IMR-90 (cell line): ENCODE measurements at regions of chr3 and their contacts with region 1.

Region 1: DNA sequence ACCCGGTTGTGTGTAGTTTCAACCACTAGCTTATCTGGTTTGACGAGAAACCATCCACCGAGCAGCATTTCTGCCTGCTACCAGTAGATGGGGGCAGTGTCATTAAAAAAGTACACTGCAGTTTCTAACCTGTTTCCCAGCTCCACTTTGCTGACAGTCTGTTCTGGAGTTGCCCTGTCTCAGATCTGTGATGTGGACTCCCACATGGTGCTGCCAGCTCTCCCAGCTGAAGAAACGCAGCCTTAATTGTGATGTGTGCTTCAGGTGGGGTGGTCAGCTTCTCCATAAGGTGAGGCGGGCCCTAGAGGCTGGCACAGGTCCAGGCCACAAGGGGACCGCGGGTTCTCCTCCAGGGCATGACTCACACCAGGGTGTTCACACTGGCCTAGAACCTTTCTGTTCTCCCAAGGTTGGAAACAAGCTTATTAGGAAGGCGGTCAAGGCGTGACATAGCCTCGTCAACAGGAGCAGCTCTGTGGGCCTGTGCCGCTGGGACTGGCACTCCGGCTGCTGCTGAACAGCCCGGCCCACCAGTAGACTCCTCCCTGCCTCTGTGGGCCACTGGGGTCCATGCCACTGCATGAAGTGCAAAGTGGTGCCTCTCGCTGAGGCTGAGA is 2.9 kb upstream of the FAM43A start:
- DNase-seq: peak; percentile 86
- ATAC-seq: peak; percentile 55
- H3K4me3 ChIP-seq: no peak overlapping the region
- H3K27ac ChIP-seq: no peak overlapping the region
- H3K4me1 ChIP-seq: peaks cover 7% of the 10 kb centered on the region
- H3K27me3 ChIP-seq: no peaks in the 10 kb centered on the region; the same call in 1 of the 2 replicates
- CTCF ChIP-seq: peak; percentile 94
- POLR2A ChIP-seq: 0 out of 2 replicates have a peak, but pooled peaks have one; percentile 27
- RAD21 ChIP-seq: peak; percentile 93

Region 2: GRCh38 chr3:194395778-194396547 is 286.8 kb before region 1 on chr3:
- CTCF ChIA-PET with region 1: no interaction called
- POLR2A ChIA-PET with region 1: no interaction called
- dilution Hi-C with region 1: no loop called
- in situ Hi-C with region 1: no loop called
- intact Hi-C with region 1: no loop called
- DNase-seq: peak; percentile 61
- ATAC-seq: peak; percentile 73
- H3K4me3 ChIP-seq: no peak overlapping the region
- H3K27ac ChIP-seq: no peak overlapping the region
- H3K4me1 ChIP-seq: peaks cover 9% of the 10 kb centered on the region
- H3K27me3 ChIP-seq: peaks cover 20% of the 10 kb centered on the region
- CTCF ChIP-seq: no peak
- POLR2A ChIP-seq: no peak
- RAD21 ChIP-seq: no peak

Region 3: DNA sequence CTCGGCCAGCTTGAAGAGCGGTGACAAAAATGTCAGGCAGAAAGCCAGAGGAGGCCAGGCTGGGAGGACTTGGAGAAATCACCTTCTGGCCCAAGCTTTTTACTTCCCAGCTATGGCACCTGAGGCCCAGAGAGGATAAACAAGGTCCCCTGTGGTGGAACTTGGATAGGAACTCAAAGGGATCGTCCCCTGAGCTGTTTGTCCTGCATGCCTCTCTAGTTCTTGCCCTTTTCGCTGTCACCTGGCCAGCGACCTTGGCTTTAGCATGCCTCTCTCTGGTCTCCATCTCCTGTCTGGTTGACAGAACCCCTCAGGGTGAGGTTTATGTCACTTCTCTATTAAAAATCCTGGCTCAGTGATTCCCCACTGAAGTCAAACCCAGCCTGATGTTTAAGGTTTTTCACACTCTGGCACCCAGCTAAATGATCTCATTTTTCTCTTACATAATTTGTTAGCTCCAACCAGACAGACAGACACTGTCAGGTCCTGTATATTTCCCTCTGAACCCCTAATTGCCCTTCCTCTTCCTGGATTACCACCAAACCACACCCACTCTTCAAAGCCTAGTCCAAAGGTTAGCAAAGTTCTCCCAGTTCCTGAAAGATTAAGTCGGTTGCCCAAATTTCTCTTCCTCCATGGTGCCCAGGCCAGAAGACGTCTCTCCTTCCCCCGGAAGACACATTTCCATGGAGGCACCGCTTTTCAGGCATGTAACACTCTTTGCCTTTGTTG is 172.0 kb after region 1 on chr3:
- CTCF ChIA-PET with region 1: no interaction called
- POLR2A ChIA-PET with region 1: no interaction called
- dilution Hi-C with region 1: no loop called
- in situ Hi-C with region 1: no loop called
- intact Hi-C with region 1: loop called (anchors 5 kb)
- DNase-seq: no peak
- ATAC-seq: no peak
- H3K4me3 ChIP-seq: no peak overlapping the region
- H3K27ac ChIP-seq: no peak overlapping the region
- H3K4me1 ChIP-seq: peaks cover 13% of the 10 kb centered on the region
- H3K27me3 ChIP-seq: peaks cover 4% of the 10 kb centered on the region; the same call in 1 of the 2 replicates
- CTCF ChIP-seq: no peak
- POLR2A ChIP-seq: no peak
- RAD21 ChIP-seq: no peak

Region 4: DNA sequence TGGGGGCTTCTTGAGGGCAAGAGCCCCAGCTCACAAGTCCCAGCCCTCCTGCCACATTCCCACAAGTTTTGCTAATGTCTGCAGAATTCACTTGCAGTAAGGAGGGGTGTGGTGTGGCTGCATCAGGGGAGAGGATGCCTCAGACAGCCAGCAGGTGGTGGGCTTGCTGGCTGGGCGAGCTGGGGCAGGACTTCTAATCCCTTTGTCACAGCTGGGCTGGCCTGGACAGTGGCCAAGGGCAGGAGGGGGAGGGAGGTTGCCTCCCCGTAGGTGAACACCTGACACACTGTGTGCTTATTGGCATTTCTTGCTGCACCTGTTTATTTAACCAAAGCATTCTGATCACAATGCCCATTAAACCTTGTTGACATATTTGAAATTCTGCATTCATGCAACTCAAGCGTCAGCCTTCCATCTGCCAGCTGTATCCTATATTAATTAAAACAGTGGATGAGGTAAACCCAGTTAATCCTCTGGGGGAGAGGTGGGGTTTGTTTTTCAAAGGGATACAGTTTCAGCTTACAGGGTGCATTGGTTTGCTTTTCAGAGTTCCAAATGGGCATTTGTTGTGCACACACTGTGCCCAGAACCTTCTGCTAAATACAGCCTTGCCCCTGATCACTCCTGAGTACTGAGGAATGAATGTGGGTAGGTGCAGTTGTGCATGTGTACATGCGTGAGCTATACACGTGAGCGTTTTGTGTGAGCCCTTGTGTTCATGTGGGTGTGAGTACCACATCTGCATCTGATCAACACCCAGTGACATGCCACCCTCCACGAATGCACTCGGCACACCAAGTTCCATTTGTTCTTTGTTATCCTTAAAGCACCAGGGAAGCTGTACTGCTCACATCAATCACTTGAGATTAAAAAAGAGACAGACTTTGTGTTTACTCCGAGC is 319.4 kb after region 1 on chr3:
- CTCF ChIA-PET with region 1: no interaction called
- POLR2A ChIA-PET with region 1: no interaction called
- dilution Hi-C with region 1: no loop called
- in situ Hi-C with region 1: no loop called
- intact Hi-C with region 1: loop called (anchors 5 kb)
- DNase-seq: peak; percentile 34
- ATAC-seq: peak; percentile 53; the same call in 1 of the 2 replicates
- H3K4me3 ChIP-seq: no peak overlapping the region
- H3K27ac ChIP-seq: no peak overlapping the region; the same call in 1 of the 2 replicates
- H3K4me1 ChIP-seq: peaks cover 6% of the 10 kb centered on the region; the same call in 1 of the 2 replicates
- H3K27me3 ChIP-seq: peaks cover 76% of the 10 kb centered on the region
- CTCF ChIP-seq: peak; percentile 43
- POLR2A ChIP-seq: no peak
- RAD21 ChIP-seq: peak; percentile 47

Region 5: GRCh38 chr3:195154793-195155535 is 472.2 kb after region 1 on chr3:
- CTCF ChIA-PET with region 1: interaction called, 8 read pairs
- POLR2A ChIA-PET with region 1: no interaction called
- dilution Hi-C with region 1: no loop called
- in situ Hi-C with region 1: no loop called
- intact Hi-C with region 1: loop called (anchors 2 kb)
- DNase-seq: peak; percentile 97
- ATAC-seq: peak; percentile 73
- H3K4me3 ChIP-seq: no peak overlapping the region
- H3K27ac ChIP-seq: peak overlapping the region; percentile 95
- H3K4me1 ChIP-seq: peaks cover 46% of the 10 kb centered on the region
- H3K27me3 ChIP-seq: no peaks in the 10 kb centered on the region
- CTCF ChIP-seq: no peak
- POLR2A ChIP-seq: no peak
- RAD21 ChIP-seq: no peak

Region 6: DNA sequence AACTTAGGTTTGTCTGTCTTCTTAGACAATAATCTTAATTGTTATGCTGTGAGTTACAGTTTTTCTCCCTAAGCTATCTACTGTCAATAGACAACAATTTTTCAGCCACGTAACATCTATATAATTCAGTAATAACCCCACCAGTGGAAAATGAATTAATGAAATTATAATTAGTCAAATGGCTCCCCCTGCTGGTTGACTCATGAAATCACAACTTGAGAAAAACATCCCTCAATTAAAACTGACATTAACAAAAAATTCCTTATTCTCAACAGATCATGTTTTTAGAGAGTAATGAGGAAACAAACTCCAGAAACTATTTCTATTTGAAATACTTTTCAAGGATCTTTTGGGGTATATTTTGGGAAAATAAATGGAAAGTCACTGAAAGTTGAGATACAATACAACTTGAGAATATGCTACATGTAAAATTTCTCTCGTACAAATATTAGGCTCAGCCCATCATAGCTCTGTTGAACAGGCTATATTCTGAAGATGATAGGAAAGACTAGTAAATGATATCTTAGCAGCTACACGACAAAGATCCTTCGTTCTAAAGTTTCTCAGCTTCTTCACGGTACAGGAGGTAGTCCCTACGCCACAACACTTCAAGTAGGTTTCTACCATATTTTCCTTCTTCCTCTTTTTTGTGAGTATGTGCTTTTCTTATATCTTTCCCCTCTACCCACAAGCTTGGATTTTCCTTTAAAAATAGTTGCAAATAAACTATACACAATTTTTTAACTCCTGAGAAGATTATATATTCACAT is 839.6 kb after region 1 on chr3:
- CTCF ChIA-PET with region 1: no interaction called
- POLR2A ChIA-PET with region 1: no interaction called
- dilution Hi-C with region 1: no loop called
- in situ Hi-C with region 1: loop called (anchors 10 kb)
- intact Hi-C with region 1: loop called (anchors 2 kb)
- DNase-seq: peak; percentile 35
- ATAC-seq: peak; percentile 59
- H3K4me3 ChIP-seq: no peak overlapping the region
- H3K27ac ChIP-seq: no peak overlapping the region
- H3K4me1 ChIP-seq: no peaks in the 10 kb centered on the region
- H3K27me3 ChIP-seq: no peaks in the 10 kb centered on the region
- CTCF ChIP-seq: peak; percentile 77
- POLR2A ChIP-seq: no peak
- RAD21 ChIP-seq: peak; percentile 73